ENCODE measurements at regions of chrX and their contacts with region 1.

Region 1: GRCh38 chrX:149286940-149287349 is 218.2 kb downstream of the IDS start:
- DNase-seq: no peak
- ATAC-seq: no peak

Region 2: GRCh38 chrX:148133105-148133725 is 1153.7 kb before region 1 on chrX:
- intact Hi-C with region 1: loop called (anchors 10 kb)
- DNase-seq: no peak
- ATAC-seq: no peak

Region 3: DNA sequence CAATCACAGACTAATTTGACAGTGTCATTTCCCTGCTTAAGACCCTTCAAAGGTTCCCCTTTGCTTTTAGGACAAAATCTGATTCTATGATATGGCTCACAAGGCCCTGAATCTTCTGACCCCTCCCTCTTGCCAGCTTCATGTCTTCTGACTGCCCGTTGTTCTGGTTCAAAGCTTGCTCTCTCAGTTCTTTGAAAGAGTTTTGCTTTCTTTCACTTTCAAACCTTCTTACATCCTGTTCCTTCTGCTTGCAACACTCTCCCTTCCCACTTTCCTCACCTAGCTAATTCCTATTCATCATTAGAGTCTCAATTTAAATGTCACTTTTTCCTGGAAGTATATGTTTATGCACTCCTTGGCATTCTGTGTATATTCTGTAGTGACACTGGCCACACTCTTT is 81.0 kb before region 1 on chrX:
- intact Hi-C with region 1: no loop called
- DNase-seq: no peak
- ATAC-seq: no peak

Measured in Right ventricle myocardium inferior (tissue), 1 donor.